T-cell (primary cell): ENCODE measurements at regions of chr1 and their contacts with region 1.

Region 1: GRCh38 chr1:210310562-210311153 is 18.0 kb upstream of the HHAT start:
- DNase-seq: no peak
- ATAC-seq: peak in 1 of 4 experiments; percentile 25
- H3K4me3 ChIP-seq: no peak overlapping the region
- H3K4me3 Mint-ChIP-seq: peak overlapping the region; percentile 70 to 87 (median 83)
- H3K27ac ChIP-seq: no peak overlapping the region
- H3K27ac Mint-ChIP-seq: no peak overlapping the region
- H3K4me1 ChIP-seq: peaks cover 2 to 8% of the 10 kb centered on the region in 2 experiments
- H3K4me1 Mint-ChIP-seq: peaks cover 5 to 7% (median 7%) of the 10 kb centered on the region in 3 donors
- H3K27me3 ChIP-seq: peaks cover 0 to 12% of the 10 kb centered on the region in 2 experiments
- H3K27me3 Mint-ChIP-seq: peaks cover 14 to 19% of the 10 kb centered on the region in 2 donors

Region 2: GRCh38 chr1:209860293-209860881 is 450.3 kb before region 1 on chr1:
- CTCF ChIA-PET with region 1: interaction called, 4 to 13 read pairs
- POLR2A ChIA-PET with region 1: no interaction called
- DNase-seq: peak; percentile 32 to 86 (median 60)
- ATAC-seq: peak; percentile 77 to 84 (median 80)
- H3K4me3 ChIP-seq: no peak overlapping the region
- H3K4me3 Mint-ChIP-seq: no peak overlapping the region
- H3K27ac ChIP-seq: no peak overlapping the region
- H3K27ac Mint-ChIP-seq: no peak overlapping the region
- H3K4me1 ChIP-seq: peaks cover 0 to 1% of the 10 kb centered on the region in 2 experiments
- H3K4me1 Mint-ChIP-seq: no peaks in the 10 kb centered on the region
- H3K27me3 ChIP-seq: peaks cover 0 to 11% of the 10 kb centered on the region in 2 experiments
- H3K27me3 Mint-ChIP-seq: peaks cover 8 to 19% of the 10 kb centered on the region in 2 donors

Region 3: DNA sequence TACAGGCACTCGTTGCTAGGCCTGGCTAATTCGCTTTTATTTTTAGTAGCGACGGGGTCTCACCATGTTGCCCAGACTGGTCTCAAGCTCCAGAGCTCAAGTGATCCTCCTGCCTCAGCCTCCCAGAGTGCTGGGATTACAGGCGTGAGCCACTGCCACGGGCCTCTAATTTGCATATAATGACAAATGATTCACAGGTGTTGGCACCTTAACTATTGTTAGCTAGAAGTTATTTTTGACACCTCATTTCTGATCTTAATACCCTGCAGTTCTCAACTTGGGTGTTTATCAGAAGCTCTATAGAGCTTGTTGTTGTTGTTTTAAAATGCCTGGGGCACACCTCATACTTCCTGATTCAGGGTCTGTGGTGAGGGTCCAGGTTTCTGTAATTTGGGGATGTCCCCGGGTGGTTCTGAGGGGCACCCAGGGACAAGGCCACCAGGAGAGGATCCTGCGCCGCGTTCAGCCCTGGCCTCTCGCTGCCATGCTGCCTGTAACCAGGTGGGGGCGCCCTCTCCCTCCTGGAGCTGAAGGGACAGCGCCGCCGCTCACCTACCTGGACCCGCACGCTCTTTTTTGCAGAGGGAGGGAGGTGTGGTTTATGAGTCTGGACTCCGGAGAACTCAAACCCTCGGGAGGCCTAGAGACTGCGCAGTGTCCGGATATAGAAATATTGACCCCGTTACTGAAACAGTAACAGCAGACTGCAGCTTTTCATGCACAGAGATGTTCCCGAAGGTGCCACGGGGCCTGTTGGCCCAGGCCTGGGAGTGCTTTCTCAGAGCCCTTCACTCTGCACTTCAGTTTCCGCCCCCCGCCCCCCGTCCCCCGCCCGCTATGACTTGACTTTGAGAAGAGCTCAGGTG is 1387.7 kb after region 1 on chr1:
- CTCF ChIA-PET with region 1: interaction called in 1 of 2 experiments, 14 read pairs
- POLR2A ChIA-PET with region 1: no interaction called
- DNase-seq: peak; percentile 44 to 84 (median 75)
- ATAC-seq: peak; percentile 88 to 94 (median 90)
- H3K4me3 ChIP-seq: peak overlapping the region in 1 of 2 donors; percentile 53
- H3K4me3 Mint-ChIP-seq: peak overlapping the region; percentile 56 to 65 (median 58)
- H3K27ac ChIP-seq: no peak overlapping the region
- H3K27ac Mint-ChIP-seq: no peak overlapping the region
- H3K4me1 ChIP-seq: peaks cover 5 to 45% of the 10 kb centered on the region in 2 experiments
- H3K4me1 Mint-ChIP-seq: peaks cover 19 to 50% (median 20%) of the 10 kb centered on the region in 3 donors
- H3K27me3 ChIP-seq: peaks cover 0 to 10% of the 10 kb centered on the region in 2 experiments
- H3K27me3 Mint-ChIP-seq: no peaks in the 10 kb centered on the region